ENCODE measurements at regions of chr2 and their contacts with region 1.

Region 1: DNA sequence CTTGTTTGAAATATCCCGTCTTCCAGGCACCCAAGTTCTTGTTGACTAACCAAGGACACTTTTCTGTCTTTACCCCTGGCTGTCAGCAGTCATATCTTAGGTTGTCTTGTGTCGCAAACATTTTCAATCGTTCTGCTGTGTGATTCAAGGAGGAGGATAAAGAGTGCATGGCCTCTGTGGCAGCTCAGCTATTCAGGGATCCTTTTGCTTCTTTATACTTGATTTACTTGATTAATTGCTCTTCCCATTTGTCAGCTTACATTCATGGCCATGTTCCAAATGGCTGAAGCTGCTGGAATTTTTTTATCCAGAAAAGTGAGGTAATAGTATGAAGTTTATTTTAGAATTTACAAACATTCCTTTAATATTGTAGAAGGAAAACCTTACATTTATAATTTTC is 97.3 kb upstream of the FZD5 start:
- DNase-seq: no peak

Region 2: GRCh38 chr2:207895274-207895865 is 28.3 kb after region 1 on chr2:
- intact Hi-C with region 1: loop called in 1 of 2 experiments (anchors 2 kb)
- DNase-seq: no peak

Region 3: DNA sequence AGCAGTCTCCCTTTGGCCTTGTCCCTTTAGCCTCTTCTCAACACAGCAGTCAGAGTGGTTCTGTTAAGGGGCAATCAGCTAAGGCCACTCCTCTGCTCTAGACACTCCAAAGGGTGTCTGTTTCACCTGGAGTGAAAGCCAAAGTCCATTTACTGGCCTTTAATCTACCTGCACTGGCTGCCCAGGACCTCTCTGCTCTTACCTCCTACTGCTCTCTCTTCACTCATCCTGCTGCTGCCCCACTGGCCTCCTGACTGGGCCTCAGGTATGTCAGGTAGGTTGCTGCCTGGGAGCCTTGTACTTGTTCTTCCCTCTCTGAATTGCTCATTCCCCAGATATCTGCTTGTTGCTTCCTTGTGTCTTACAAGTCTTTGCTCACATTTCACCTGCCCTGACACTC is 467.2 kb after region 1 on chr2:
- intact Hi-C with region 1: no loop called
- DNase-seq: no peak

Region 4: DNA sequence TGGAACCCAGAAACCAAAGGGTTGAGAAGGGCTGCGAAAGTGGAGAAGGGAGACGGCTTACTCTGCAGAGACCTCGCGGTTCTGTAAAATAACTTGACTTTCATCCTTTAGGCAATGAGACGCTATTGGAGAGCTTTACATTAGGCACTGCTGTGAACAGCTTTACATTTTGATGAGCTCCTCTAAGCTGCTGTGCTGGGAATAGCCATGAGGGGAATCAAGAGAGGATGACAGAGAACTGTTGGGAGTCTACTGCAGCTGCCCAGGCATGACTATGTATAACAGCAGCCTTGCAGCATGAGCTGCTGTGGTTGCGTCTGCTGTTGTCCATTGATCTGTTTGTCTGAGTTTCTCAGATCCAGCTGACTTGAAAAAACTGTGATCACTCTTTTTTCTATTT is 1246.0 kb after region 1 on chr2:
- intact Hi-C with region 1: no loop called
- DNase-seq: no peak

Region 5: DNA sequence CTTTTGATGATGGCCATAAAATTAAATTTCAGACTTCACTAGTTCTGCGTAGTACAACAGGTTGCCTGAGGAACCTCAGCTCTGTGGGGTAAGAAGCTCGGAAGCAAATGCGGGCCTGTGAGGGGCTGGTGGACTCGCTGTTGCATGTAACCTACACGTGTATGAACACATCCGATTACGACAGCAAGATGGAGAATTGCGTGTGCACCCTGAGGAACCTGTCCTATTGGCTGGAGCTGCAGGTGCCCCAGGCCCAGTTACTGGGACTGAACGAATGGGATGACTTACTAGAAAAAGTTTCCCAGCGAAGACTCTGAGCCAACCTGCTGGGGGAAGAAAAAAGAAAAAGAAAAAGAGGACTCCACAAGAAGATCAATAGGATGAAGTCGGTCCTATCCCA is 1312.6 kb after region 1 on chr2:
- intact Hi-C with region 1: no loop called
- DNase-seq: no peak

Measured in posterior vena cava (tissue), 2 donors.